ENCODE measurements at regions of chr6 and their contacts with region 1.

Region 1: GRCh38 chr6:151900730-151901433 is 93.4 kb downstream of the ESR1 start:
- DNase-seq: peak; percentile 91 to 100
- H3K4me3 ChIP-seq: peak overlapping the region; percentile 47; the same call in 1 of the 2 replicates
- H3K27ac ChIP-seq: peak overlapping the region; percentile 100
- H3K4me1 ChIP-seq: peaks cover 42% of the 10 kb centered on the region
- H3K27me3 ChIP-seq: no peaks in the 10 kb centered on the region
- CTCF ChIP-seq: no peak; the same call in 1 of the 2 replicates

Region 2: GRCh38 chr6:151399630-151400029 is 501.3 kb before region 1 on chr6:
- CTCF ChIA-PET with region 1: no interaction called
- POLR2A ChIA-PET with region 1: no interaction called
- intact Hi-C with region 1: loop called (anchors 5 kb)
- DNase-seq: peak; percentile 20 to 95
- H3K4me3 ChIP-seq: no peak overlapping the region; the same call in 1 of the 2 replicates
- H3K27ac ChIP-seq: peak overlapping the region; percentile 64
- H3K4me1 ChIP-seq: peaks cover 35% of the 10 kb centered on the region
- H3K27me3 ChIP-seq: no peaks in the 10 kb centered on the region
- CTCF ChIP-seq: no peak

Region 3: DNA sequence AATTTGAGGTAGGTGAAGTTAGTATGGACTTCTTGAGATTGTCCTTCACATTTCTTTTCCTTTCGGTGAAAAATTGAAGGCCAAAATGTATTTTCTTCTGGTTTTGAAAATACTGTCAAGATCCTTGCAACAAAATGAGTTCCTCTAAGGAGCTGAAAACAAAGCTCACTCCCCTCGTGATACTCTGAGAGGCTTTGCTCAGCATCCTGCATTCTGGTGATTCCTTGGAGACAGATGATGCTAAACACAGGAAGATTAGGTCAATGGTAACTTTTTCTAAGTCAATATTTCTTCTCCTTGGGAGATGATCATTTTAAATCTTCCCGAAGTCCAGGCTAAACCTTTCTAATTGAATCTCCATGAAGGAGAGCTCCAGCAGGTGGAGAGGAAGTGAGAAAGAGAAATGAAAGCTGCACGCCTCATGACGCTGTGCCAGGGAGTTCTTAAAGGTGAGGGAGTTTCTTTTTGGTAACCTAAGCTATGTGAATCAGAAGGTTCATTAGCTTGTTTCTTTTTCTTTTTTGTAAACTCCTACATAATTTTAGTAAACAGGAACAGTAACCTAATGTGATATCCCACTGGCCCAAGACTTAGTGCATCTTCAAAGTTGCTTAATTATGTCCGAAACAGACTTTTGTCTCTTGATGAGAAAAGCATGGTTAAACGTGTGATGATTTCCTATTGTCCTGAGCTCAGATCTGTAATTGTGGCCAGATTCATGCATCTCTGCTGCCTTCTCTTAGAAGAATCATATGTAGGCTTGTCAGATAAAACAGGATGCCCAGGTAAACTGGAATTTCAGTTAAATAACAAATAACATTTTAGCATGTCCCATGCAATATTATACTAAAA is 78.4 kb before region 1 on chr6:
- CTCF ChIA-PET with region 1: no interaction called
- POLR2A ChIA-PET with region 1: no interaction called
- intact Hi-C with region 1: no loop called
- DNase-seq: no peak
- H3K4me3 ChIP-seq: no peak overlapping the region
- H3K27ac ChIP-seq: no peak overlapping the region
- H3K4me1 ChIP-seq: no peaks in the 10 kb centered on the region
- H3K27me3 ChIP-seq: no peaks in the 10 kb centered on the region
- CTCF ChIP-seq: no peak

Region 4: DNA sequence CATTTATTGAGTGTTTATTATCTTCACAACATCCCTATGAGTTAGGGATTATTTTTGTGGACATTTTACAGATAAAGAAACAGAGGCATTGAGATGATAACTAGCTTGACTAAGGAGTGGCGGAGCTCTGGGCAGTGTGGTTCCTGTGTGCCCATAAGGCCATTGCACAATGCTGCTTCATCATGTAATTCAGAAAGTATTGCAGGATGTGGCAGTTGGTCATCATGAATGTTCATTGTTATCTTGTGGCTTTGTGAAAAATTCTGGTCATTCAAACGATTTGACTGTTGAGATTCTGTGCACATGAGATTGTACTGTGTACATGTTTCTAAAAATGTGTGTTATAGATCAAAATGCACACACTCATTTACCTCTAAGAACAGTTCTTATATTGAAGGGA is 57.4 kb after region 1 on chr6:
- CTCF ChIA-PET with region 1: no interaction called
- POLR2A ChIA-PET with region 1: no interaction called
- intact Hi-C with region 1: loop called (anchors 5 kb)
- DNase-seq: no peak
- H3K4me3 ChIP-seq: no peak overlapping the region
- H3K27ac ChIP-seq: no peak overlapping the region
- H3K4me1 ChIP-seq: no peaks in the 10 kb centered on the region
- H3K27me3 ChIP-seq: no peaks in the 10 kb centered on the region
- CTCF ChIP-seq: no peak

Region 5: DNA sequence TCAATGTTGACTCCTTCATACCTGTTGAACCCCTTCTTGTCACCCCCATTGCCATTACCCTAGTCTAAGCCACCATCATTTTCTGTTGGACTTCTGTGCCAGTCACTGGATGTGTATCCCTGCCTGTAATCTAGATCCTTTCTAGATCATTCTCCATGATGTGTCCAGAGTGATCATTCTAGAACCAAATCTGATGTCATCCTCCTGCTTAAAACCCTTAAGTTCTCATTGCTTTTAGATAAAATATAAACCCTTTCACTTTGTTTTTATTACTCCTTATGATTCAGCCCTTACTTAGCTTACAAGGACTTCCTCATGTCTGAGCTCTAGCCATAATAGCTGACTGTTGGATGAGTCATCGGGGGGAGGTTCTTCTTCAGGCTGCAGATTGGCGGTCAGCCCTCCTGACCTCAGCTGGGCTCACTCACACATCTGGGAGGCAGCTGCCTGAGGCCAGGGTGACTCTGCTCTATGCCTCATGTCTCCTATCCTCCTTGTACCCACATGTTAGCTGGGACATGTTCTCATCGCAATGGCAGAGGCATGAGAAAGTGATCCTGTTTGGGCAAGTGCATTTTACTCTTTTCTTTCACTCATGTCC is 194.2 kb after region 1 on chr6:
- CTCF ChIA-PET with region 1: interaction called, 3 read pairs
- POLR2A ChIA-PET with region 1: no interaction called
- intact Hi-C with region 1: loop called (anchors 1 kb)
- DNase-seq: peak; percentile 64 to 95
- H3K4me3 ChIP-seq: no peak overlapping the region
- H3K27ac ChIP-seq: peak overlapping the region; percentile 86
- H3K4me1 ChIP-seq: peaks cover 72% of the 10 kb centered on the region
- H3K27me3 ChIP-seq: no peaks in the 10 kb centered on the region
- CTCF ChIP-seq: no peak

Region 6: GRCh38 chr6:152267967-152268845 is 367.3 kb after region 1 on chr6:
- CTCF ChIA-PET with region 1: interaction called, 3 read pairs
- POLR2A ChIA-PET with region 1: no interaction called
- intact Hi-C with region 1: loop called (anchors 2 kb)
- DNase-seq: peak in 1 of 2 experiments; percentile 12
- H3K4me3 ChIP-seq: no peak overlapping the region
- H3K27ac ChIP-seq: no peak overlapping the region
- H3K4me1 ChIP-seq: peaks cover 29% of the 10 kb centered on the region
- H3K27me3 ChIP-seq: no peaks in the 10 kb centered on the region
- CTCF ChIP-seq: peak; percentile 81